A673 (cell line): ENCODE measurements at regions of chr11 and their contacts with region 1.

Region 1: DNA sequence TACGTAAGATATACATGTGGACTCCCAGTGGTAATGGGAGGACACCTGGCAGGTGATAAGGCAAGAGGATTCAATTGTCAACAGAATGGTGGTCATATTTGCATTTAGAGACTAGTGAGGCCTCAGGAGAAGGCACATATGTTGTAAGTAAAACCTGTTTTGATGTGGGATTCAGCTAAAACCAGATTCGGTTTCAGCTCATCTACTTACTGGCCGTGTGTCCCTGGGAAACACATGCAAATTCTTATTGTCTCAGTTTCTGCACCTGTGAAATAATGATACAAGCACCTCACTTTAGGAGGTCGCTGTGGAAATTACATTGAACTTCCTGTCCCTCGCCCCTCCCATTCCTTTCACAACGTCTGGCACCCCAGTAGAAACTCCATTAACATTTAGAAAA is 78.9 kb upstream of the FIBIN start:
- DNase-seq: no peak
- H3K4me3 ChIP-seq: no peak overlapping the region
- H3K27ac ChIP-seq: no peak overlapping the region
- H3K4me1 ChIP-seq: no peaks in the 10 kb centered on the region
- H3K27me3 ChIP-seq: peaks cover 60% of the 10 kb centered on the region
- CTCF ChIP-seq: no peak

Region 2: DNA sequence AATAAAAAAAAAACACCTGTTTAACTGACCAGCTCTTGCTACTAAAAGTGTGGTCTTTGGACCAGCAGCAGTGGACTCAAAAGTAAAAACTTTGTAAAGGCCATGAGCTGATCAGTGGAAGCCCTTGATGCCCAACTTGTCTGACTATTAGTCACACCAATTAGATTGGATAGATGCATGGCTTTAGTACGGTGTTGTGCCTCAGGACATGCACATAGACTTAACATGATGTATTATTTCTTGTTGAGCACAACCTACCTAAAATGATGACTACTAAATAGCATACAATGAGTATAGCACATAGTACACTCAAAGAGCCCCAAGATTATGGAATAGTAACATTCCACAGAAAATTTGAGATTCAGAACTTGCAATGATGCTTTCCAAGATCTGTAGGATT is 16.2 kb before region 1 on chr11:
- CTCF ChIA-PET with region 1: no interaction called
- POLR2A ChIA-PET with region 1: no interaction called
- intact Hi-C with region 1: loop called (anchors 1 kb)
- DNase-seq: no peak
- H3K4me3 ChIP-seq: no peak overlapping the region
- H3K27ac ChIP-seq: no peak overlapping the region
- H3K4me1 ChIP-seq: no peaks in the 10 kb centered on the region
- H3K27me3 ChIP-seq: peaks cover 44% of the 10 kb centered on the region
- CTCF ChIP-seq: no peak